ENCODE measurements at regions of chr5 and their contacts with region 1.

Region 1: DNA sequence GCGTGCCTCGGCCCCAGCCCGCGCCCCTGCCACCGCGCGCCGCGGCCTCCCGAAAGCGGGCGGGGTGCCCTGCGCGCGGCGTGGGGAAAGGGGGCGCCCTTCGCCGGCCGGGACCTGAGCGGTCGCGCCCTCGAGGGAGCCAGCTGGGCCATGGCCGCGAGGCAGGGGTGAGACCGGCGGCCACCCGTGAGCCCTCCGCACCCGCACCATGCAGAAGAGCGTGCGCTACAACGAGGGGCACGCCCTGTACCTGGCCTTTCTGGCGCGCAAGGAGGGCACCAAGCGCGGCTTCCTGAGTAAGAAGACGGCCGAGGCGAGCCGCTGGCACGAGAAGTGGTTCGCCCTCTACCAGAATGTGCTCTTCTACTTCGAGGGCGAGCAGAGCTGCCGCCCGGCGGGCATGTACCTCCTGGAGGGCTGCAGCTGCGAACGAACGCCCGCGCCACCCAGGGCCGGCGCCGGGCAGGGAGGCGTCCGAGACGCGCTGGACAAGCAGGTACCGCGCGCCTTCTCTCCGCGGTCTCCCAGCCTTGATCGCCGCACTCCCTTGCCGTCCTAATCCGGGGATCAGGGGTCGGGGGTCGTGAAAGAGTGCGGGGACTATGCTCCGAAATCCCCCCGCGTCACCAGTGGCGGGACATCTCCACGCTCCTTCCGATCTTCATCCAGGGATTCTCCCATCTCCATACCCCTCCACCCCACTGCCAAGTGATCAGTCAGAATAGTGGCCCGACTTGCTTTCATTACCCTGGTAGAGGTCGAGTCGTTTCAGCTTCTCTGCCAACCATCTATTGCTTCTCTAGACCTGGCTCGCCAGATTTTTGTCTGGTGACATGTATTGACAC is 590 bp downstream of the RASGRF2 start:
- DNase-seq: peak; percentile 67
- ATAC-seq: peak; percentile 50

Region 2: DNA sequence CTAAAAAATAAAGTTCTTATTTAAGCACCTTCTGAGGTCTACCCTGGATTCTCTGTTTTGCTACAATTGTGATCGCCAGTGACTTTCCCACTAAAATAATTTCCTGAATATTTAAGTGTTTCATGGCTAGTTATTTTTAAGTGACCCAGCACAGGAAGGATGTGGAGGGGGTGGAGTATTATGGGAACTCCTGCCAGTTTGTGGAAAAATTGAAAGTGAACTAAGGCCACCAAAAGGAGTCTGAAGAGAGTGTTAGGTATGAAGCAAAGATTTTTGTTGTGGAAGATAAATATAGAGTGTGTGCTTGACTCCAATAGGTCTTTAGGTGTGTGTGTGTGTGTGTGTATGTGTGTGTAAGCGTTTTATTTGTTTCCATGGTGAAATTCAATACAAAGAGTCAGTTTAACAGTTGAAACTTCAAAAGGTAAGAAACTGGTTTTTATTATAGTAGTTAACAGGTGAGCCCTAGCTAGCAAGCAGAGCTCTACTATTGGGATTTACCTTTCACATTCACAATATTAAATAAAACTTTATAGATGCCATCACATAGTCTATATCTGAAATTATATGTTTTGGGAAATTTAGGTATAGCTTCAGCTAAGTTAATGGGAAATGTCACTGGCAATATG is 25.0 kb after region 1 on chr5:
- intact Hi-C with region 1: loop called (anchors 2 kb)
- DNase-seq: no peak
- ATAC-seq: no peak

Region 3: GRCh38 chr5:81020478-81021174 is 59.9 kb after region 1 on chr5:
- intact Hi-C with region 1: loop called (anchors 10 kb)
- DNase-seq: no peak
- ATAC-seq: no peak

Region 4: DNA sequence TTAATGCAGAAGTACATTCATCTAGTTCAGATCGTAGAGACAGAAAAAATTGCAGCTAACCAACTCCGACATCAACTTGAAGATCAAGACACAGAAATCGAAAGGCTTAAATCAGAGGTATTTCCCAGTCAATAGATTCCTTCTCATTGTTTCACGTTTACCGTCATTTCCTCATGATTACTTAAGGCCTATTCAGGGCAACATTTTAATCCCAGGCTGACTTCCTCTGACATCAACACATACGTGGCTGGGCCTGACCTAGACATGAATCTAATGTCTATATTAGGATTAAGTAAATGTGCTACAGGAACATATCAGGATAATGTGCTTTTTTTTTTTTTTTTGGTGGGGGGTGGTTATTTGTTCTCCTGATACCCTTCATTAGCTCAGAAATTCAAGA is 107.3 kb after region 1 on chr5:
- intact Hi-C with region 1: loop called (anchors 5 kb)
- DNase-seq: no peak
- ATAC-seq: no peak

Region 5: DNA sequence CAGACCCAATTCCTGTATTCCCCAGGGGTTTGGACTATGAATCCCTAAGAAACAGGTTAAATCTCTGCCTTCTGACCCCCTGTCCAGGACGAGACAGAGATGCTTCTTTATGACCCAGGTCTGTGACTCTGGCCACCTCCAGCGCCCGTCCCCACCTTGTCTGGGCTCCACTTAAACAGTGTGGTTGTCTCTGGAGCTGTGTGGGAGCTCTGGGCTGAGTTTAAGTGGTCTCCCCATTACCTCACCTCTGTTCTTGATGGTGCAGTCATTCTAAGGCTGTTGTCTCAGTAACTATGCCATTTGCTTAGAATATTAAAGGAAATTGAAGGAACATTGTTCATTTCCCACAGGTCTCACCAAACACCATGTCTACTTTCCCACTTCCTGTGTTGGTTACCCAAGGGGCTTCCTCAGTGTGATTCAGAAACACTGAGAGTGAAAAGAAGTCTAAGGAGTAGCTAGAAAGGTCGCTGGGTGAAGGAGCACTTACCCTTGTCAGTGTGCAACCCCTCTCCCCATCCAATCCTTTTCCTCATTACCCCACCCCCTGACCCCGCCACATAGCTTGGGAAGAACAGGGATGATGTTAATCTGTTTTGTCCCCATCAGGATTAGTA is 144.6 kb after region 1 on chr5:
- intact Hi-C with region 1: loop called (anchors 1 kb)
- DNase-seq: no peak
- ATAC-seq: no peak

Region 6: GRCh38 chr5:81254886-81255557 is 294.3 kb after region 1 on chr5:
- intact Hi-C with region 1: no loop called
- DNase-seq: no peak
- ATAC-seq: no peak

Measured in Right ventricle myocardium inferior (tissue), 1 donor.